H1 (cell line): ENCODE measurements at regions of chr22 and their contacts with region 1.

Region 1: GRCh38 chr22:26330966-26331625 is 98.0 kb upstream of the ASPHD2 start:
- DNase-seq: peak; percentile 29 to 86
- H3K4me3 ChIP-seq: no peak overlapping the region
- H3K27ac ChIP-seq: no peak overlapping the region
- H3K4me1 ChIP-seq: no peaks in the 10 kb centered on the region
- H3K27me3 ChIP-seq: peaks cover 0 to 3% (median under 1%) of the 10 kb centered on the region in 4 experiments; a peak in 1 of 7 replicates
- CTCF ChIP-seq: peak; percentile 88 to 95 (median 94)
- EP300 ChIP-seq: no peak
- POLR2A ChIP-seq: no peak
- RAD21 ChIP-seq: peak; percentile 99 to 100

Region 2: GRCh38 chr22:26259519-26259918 is 71.6 kb before region 1 on chr22:
- CTCF ChIA-PET with region 1: interaction called, 18 read pairs
- POLR2A ChIA-PET with region 1: no interaction called
- DNase-seq: peak; percentile 44 to 73
- H3K4me3 ChIP-seq: no peak overlapping the region
- H3K27ac ChIP-seq: no peak overlapping the region
- H3K4me1 ChIP-seq: no peaks in the 10 kb centered on the region
- H3K27me3 ChIP-seq: peaks cover 0 to 3% (median 0%) of the 10 kb centered on the region in 4 experiments; a peak in 2 of 7 replicates
- CTCF ChIP-seq: 0 out of 4 replicates have a peak, but pooled peaks of 1 of the 3 experiments have one; percentile 6
- EP300 ChIP-seq: no peak
- POLR2A ChIP-seq: no peak
- RAD21 ChIP-seq: peak; percentile 50 to 53

Region 3: DNA sequence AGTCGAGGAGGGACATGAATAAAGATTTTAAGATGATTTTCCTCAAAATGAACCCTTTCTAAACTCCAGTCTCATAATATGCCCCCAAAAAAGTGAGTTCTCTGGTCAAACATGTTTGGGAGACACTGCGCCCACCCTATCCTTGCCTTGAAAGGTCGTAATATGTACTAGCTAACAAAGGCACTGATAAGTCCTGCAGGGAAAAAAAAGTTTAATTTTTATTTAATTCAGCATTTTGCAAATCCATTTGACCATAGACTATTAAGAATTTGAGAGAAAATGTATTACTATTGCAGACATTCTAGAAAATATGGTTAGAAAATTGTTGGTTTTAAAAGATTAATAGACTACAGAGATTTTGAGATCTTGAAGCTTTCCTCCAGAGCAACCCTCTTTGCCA is 22.6 kb before region 1 on chr22:
- CTCF ChIA-PET with region 1: interaction called, 11 read pairs
- POLR2A ChIA-PET with region 1: no interaction called
- DNase-seq: no peak
- H3K4me3 ChIP-seq: no peak overlapping the region
- H3K27ac ChIP-seq: no peak overlapping the region
- H3K4me1 ChIP-seq: no peaks in the 10 kb centered on the region; a peak in 2 of 7 replicates
- H3K27me3 ChIP-seq: peaks cover 0 to 2% (median 0%) of the 10 kb centered on the region in 4 experiments; a peak in 1 of 7 replicates
- CTCF ChIP-seq: no peak
- EP300 ChIP-seq: no peak
- POLR2A ChIP-seq: no peak
- RAD21 ChIP-seq: no peak

Region 4: GRCh38 chr22:26318975-26319374 is 12.1 kb before region 1 on chr22:
- CTCF ChIA-PET with region 1: interaction called, 27 read pairs
- POLR2A ChIA-PET with region 1: no interaction called
- DNase-seq: no peak
- H3K4me3 ChIP-seq: no peak overlapping the region
- H3K27ac ChIP-seq: no peak overlapping the region
- H3K4me1 ChIP-seq: no peaks in the 10 kb centered on the region
- H3K27me3 ChIP-seq: no peaks in the 10 kb centered on the region
- CTCF ChIP-seq: no peak
- EP300 ChIP-seq: no peak
- POLR2A ChIP-seq: no peak
- RAD21 ChIP-seq: peak in 1 of 2 experiments; percentile 25; a peak in 2 of 4 replicates

Region 5: GRCh38 chr22:26345496-26345895 is 14.4 kb after region 1 on chr22:
- CTCF ChIA-PET with region 1: interaction called, 10 read pairs
- POLR2A ChIA-PET with region 1: no interaction called
- DNase-seq: no peak
- H3K4me3 ChIP-seq: no peak overlapping the region
- H3K27ac ChIP-seq: no peak overlapping the region
- H3K4me1 ChIP-seq: no peaks in the 10 kb centered on the region
- H3K27me3 ChIP-seq: peaks cover 0 to 4% (median 0%) of the 10 kb centered on the region in 4 experiments; a peak in 3 of 7 replicates
- CTCF ChIP-seq: no peak
- EP300 ChIP-seq: no peak
- POLR2A ChIP-seq: no peak
- RAD21 ChIP-seq: no peak

Region 6: GRCh38 chr22:26428515-26429457 is 97.7 kb after region 1 on chr22 and contains the start of gene ASPHD2:
- CTCF ChIA-PET with region 1: no interaction called
- POLR2A ChIA-PET with region 1: no interaction called
- DNase-seq: peak; percentile 9 to 75
- H3K4me3 ChIP-seq: peak within 1 kb of the TSS; percentile 61 to 85 (median 71)
- H3K27ac ChIP-seq: no peak within 1 kb of the TSS
- H3K4me1 ChIP-seq: peaks cover 0 to 8% (median 2%) of the 10 kb centered on the region in 4 experiments; a peak in 4 of 7 replicates
- H3K27me3 ChIP-seq: peaks cover 0 to 6% (median 6%) of the 10 kb centered on the region in 4 experiments; a peak in 4 of 7 replicates
- CTCF ChIP-seq: no peak
- EP300 ChIP-seq: no peak
- POLR2A ChIP-seq: peak; percentile 58 to 70
- RAD21 ChIP-seq: no peak
- total RNA-seq, gene ASPHD2: 11.0 and 11.1 TPM in 2 replicates